ENCODE measurements at regions of chr11 and their contacts with region 1.

Region 1: DNA sequence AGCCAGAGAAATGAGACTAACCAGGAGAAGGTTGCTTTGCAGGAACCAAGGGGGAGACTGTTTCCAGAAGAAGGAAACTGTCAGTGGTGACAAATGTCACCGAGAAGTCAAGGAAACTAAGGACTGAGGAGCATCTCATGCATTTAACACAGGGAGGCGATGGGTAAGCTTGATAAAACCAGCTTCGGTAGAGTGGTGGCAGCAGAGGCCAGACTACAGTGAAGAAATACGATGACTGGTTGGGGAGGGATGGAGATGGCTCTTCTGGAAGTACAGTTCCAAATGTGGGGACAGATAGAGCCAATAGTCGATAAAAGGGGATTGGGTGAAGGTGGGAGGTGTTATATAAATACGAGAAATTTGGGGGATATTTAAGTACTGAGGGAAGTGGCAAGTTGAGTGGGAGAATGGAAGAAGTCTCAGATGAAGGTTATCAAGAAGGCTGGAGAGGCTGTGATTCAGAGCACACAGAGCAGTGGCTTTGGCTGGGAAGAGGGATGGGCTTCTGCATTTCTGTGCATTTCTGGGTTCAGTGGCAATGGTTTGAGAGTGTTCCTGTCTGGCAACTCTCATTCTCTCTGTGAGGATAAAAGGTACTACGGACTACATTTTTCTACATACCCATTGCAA is 29.2 kb downstream of the SC5D start:
- DNase-seq: peak; percentile 55
- H3K4me3 ChIP-seq: no peak overlapping the region
- H3K27ac ChIP-seq: no peak overlapping the region
- H3K4me1 ChIP-seq: no peaks in the 10 kb centered on the region
- H3K27me3 ChIP-seq: no peaks in the 10 kb centered on the region
- CTCF ChIP-seq: peak; percentile 30

Region 2: DNA sequence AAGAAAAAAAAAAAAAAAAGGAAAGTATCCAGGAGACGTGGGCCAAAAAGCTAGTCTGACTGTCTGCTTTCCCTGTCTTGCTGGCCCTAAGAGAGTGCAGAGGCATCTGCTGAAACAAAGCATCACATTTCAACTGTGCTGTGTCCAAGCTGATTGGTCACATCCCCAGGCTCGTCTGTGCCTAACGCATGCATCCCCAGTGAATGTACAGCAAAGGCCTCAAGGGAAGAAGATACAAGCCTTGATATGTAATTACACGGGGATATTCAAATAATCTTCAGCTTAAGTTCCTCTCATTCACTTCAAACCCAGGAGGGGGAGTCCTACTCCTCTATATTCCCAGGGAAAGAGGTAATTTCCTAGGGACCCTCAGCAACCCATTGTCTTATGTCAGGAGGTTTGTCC is 125.0 kb after region 1 on chr11:
- intact Hi-C with region 1: loop called (anchors 10 kb)
- DNase-seq: no peak
- H3K4me3 ChIP-seq: no peak overlapping the region
- H3K27ac ChIP-seq: no peak overlapping the region
- H3K4me1 ChIP-seq: no peaks in the 10 kb centered on the region
- H3K27me3 ChIP-seq: no peaks in the 10 kb centered on the region
- CTCF ChIP-seq: no peak

Region 3: DNA sequence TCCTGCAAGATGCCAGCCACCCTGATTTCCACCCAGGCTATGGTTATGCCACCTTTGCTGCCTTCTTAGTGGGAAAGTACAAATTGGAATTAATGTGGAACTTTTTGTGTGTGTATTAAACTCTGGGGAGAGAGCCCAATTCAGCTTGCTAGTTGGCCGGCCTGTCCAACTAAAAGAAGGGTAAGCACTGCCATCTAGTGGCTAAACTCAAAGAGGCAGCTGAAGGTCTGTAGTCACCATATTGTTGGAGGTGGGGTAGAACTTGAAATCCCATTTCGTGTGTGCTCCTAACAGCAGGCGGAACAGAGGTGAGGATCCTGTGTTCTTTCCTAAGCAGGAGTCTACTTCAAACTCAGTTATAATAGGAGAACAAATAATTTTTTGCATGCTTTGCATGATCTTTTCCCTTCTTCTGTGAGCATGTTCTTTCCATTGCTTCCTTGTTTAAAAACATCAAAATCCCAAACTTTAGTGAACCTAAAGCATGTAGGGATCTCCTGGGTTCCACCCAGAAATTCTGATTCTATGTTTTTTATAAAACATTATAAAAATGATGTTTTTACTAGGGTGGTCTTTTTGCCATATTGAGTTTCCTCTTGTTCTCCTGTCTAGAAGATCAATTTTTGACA is 269.8 kb after region 1 on chr11:
- intact Hi-C with region 1: loop called (anchors 2 kb)
- DNase-seq: peak; percentile 81
- H3K4me3 ChIP-seq: no peak overlapping the region
- H3K27ac ChIP-seq: no peak overlapping the region
- H3K4me1 ChIP-seq: no peaks in the 10 kb centered on the region
- H3K27me3 ChIP-seq: no peaks in the 10 kb centered on the region
- CTCF ChIP-seq: peak; percentile 78

Measured in colonic mucosa (tissue), 4 donors.